ENCODE measurements at regions of chr19 and their contacts with region 1.

Region 1: GRCh38 chr19:49590071-49590970 is 661 bp upstream of the PRR12 start:
- DNase-seq: peak; percentile 98
- H3K4me3 Mint-ChIP-seq: peak overlapping the region; percentile 88
- H3K27ac Mint-ChIP-seq: peak overlapping the region; percentile 67
- H3K4me1 Mint-ChIP-seq: peaks cover 30% of the 10 kb centered on the region
- H3K27me3 Mint-ChIP-seq: peaks cover 11% of the 10 kb centered on the region

Region 2: DNA sequence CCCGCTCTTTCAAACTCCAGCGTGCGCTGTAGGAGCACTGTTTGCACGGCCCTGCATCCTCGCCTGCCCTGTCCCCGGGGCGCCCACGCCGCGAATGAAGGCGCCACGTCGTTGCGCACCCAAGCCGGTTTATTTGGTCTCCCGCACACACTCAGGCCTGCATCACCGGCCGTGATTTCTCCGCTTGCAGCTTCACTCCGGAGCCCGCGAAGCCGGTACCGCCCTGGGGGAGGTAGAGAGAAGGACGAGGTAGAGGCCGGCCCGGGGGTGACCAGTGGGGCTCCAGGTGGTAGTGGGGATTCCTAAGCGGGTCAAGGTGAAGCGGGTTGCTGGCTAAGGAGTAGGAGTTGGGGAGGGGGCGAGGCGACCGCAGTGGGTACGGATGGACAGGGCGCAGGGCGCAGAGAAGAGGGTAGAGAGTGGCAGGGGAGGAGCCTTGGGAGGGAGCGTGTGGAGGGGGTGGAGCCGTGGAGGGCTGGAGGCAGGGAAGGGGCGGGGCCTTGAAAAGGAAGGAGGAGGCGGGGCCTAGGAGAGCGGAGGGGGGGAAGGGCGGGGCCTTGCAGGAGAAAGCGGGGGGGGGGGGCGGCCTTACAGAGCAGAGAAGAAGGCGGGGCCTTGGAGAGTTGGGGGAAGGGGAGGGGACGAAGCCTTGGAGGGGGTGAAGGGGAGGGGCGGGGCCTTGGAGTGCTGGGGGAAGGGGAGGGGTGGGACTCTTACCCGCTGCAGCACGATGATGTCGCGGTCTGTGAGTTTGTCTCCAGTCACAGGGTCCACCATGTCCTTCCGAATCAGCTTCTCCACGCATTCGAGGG is 34.5 kb before region 1 on chr19:
- intact Hi-C with region 1: loop called (anchors 2 kb)
- DNase-seq: peak; percentile 93
- H3K4me3 Mint-ChIP-seq: peak overlapping the region; percentile 48
- H3K27ac Mint-ChIP-seq: peak overlapping the region; percentile 100
- H3K4me1 Mint-ChIP-seq: peaks cover 70% of the 10 kb centered on the region
- H3K27me3 Mint-ChIP-seq: no peaks in the 10 kb centered on the region

Region 3: GRCh38 chr19:49665351-49666119 is 75.2 kb after region 1 on chr19 and contains the starts of genes BCL2L12 and IRF3:
- intact Hi-C with region 1: loop called (anchors 2 kb)
- DNase-seq: peak; percentile 100
- H3K4me3 Mint-ChIP-seq: peak within 1 kb of the TSS; percentile 97
- H3K27ac Mint-ChIP-seq: peak within 1 kb of the TSS; percentile 95
- H3K4me1 Mint-ChIP-seq: peaks cover 39% of the 10 kb centered on the region
- H3K27me3 Mint-ChIP-seq: no peaks in the 10 kb centered on the region
- total RNA-seq, gene BCL2L12: 69.3 and 72.0 TPM in 2 replicates
- total RNA-seq, gene IRF3: 146 and 151 TPM in 2 replicates

Region 4: GRCh38 chr19:49766007-49766937 is 176.0 kb after region 1 on chr19:
- intact Hi-C with region 1: loop called (anchors 2 kb)
- DNase-seq: peak; percentile 100
- H3K4me3 Mint-ChIP-seq: peak overlapping the region; percentile 91
- H3K27ac Mint-ChIP-seq: peak overlapping the region; percentile 92
- H3K4me1 Mint-ChIP-seq: peaks cover 32% of the 10 kb centered on the region
- H3K27me3 Mint-ChIP-seq: no peaks in the 10 kb centered on the region

Region 5: GRCh38 chr19:49929611-49930482 is 339.5 kb after region 1 on chr19:
- intact Hi-C with region 1: loop called (anchors 5 kb)
- DNase-seq: peak; percentile 98
- H3K4me3 Mint-ChIP-seq: peak overlapping the region; percentile 97
- H3K27ac Mint-ChIP-seq: peak overlapping the region; percentile 100
- H3K4me1 Mint-ChIP-seq: peaks cover 54% of the 10 kb centered on the region
- H3K27me3 Mint-ChIP-seq: peaks cover 3% of the 10 kb centered on the region

Measured in activated CD4-positive, alpha-beta T cell treated with anti-CD3 and anti-CD28 coated beads, Interleukin-2, amount 10 ng/mL, durations not matched to agents 24 days and 14 days (primary cell).